ENCODE measurements at regions of chr3 and their contacts with region 1.

Region 1: DNA sequence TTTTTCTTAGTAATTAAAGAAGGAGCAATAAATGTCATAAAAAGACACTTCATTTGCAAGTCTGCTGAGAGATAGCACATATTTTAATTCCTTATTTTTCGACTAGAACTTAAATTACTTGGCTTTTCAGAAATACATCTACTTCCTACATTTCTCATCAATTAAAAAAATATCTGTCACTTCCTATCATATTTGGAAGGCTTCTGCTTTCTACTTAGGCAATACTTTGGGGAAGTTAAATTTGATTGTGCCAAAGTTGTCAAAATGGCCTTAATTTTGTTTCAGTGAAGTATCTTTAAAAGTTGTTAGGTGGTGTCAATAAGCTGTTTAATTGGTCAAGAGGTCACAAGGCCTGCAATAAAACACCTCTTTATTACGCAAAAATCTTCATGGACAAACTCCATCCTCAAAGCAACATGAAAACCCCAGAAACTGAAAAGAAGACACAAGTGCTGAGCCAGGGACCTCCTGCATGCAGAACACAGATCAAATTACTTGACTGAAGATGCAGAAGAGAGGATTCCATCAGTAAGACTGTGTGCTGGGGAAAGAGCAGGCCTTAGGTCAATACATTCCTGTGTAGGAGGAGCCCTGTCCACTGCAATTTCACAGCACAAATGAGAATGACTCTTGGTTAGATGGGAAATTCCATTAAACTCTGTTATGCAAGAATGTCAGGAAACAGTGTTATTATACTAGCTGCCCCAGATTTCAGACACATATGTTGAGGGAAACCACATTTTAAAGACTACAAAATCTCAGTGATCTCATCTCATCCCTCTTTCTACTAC is 48.0 kb upstream of the FSTL1 start:
- DNase-seq: peak; percentile 91
- ATAC-seq: peak; percentile 77
- H3K4me3 ChIP-seq: no peak overlapping the region
- H3K27ac ChIP-seq: 0 out of 2 replicates have a peak overlapping the region, but pooled peaks have one; percentile 4
- H3K4me1 ChIP-seq: peaks cover 36% of the 10 kb centered on the region
- H3K27me3 ChIP-seq: no peaks in the 10 kb centered on the region
- CTCF ChIP-seq: no peak

Region 2: GRCh38 chr3:120438665-120439370 is 59.9 kb before region 1 on chr3:
- CTCF ChIA-PET with region 1: no interaction called
- POLR2A ChIA-PET with region 1: interaction called, 4 read pairs
- intact Hi-C with region 1: loop called (anchors 2 kb)
- DNase-seq: peak; percentile 89
- ATAC-seq: peak; percentile 77
- H3K4me3 ChIP-seq: peak overlapping the region; percentile 8; the same call in 1 of the 2 replicates
- H3K27ac ChIP-seq: peak overlapping the region; percentile 74
- H3K4me1 ChIP-seq: peaks cover 79% of the 10 kb centered on the region
- H3K27me3 ChIP-seq: no peaks in the 10 kb centered on the region
- CTCF ChIP-seq: no peak

Region 3: DNA sequence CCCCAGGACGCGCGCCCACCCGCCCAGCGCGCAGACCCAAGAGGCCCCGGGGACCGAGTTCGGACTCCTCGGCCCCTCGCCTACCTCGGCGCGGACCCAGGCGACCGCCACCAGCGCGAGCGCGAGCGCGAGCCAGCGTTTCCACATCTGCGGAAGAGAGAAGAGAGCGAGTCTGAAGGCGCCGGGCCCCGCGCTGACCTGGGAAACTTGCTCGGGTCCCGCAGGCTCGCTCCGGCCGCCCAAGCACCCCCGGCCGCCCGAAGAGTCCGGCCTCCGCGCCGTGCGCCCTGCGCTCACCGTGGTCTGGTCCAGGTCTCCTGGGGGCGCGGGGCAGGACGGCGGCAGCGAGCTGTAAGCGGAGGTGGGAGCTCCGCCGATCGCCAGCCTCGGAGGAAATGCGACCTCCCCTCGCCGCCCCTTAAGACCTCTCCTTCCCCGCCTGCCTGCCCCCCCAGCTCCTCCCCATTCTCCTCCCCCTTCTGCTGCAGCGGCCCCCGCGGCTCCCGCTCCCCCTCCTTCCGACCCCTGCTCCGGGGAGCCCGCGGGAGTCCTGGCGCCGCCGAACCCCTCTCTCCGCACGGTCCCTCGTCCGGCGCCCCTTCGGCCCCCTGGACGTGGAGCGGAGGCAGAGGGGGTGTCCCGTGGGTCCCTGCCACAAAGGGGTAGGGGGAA is 48.0 kb before region 1 on chr3 and contains the start of gene FSTL1:
- CTCF ChIA-PET with region 1: no interaction called
- POLR2A ChIA-PET with region 1: interaction called, 8 read pairs
- intact Hi-C with region 1: loop called (anchors 1 kb)
- DNase-seq: peak; percentile 45
- ATAC-seq: peak; percentile 49
- H3K4me3 ChIP-seq: peak within 1 kb of the TSS; percentile 81
- H3K27ac ChIP-seq: peak within 1 kb of the TSS; percentile 25
- H3K4me1 ChIP-seq: peaks cover 38% of the 10 kb centered on the region
- H3K27me3 ChIP-seq: no peaks in the 10 kb centered on the region
- CTCF ChIP-seq: no peak
- total RNA-seq, gene FSTL1: 178 and 185 TPM in 2 replicates

Region 4: DNA sequence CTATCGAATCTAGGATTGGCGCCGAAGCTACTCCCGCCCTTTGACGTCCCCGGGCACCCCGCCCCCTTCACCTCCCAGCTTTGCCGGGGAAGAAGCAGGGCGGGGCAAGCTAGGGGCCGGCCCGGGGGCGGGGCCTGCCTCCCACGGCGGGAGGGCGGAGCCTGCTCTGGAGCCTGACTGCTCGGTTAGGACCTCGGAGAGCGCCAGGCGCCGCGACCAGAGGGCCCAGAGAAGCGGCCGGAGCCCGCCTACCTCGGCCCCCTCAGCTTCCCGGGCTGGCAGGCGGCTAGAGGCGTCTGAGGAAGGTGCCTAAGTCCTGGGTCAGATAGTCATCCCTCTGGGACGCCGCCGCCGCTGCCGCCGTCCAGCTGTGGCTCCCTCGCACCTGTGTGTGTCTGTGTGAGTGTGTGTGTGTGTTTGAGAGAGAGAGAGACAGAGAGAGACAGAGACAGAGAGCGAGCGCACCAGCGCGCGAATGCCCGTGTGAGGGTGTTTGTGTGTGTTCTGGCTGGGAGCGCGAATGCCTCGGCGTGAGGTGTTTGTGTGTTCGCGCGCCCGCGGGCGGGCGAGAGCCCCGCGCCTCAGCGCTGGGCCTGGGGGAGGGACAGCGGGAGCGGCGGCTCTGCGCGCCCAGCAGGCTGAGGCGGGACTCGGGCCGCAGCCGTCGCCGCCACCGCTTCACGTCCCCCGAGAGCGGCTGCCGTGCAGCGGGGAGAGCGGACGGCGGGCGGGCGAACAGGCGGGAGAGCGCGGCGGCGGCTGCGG is 409.5 kb after region 1 on chr3 and contains the start of gene STXBP5L:
- CTCF ChIA-PET with region 1: no interaction called
- POLR2A ChIA-PET with region 1: interaction called, 11 read pairs
- intact Hi-C with region 1: no loop called
- DNase-seq: peak; percentile 82
- ATAC-seq: peak; percentile 88
- H3K4me3 ChIP-seq: peak within 1 kb of the TSS; percentile 53
- H3K27ac ChIP-seq: no peak within 1 kb of the TSS
- H3K4me1 ChIP-seq: no peaks in the 10 kb centered on the region; the same call in 1 of the 2 replicates
- H3K27me3 ChIP-seq: peaks cover 79% of the 10 kb centered on the region
- CTCF ChIP-seq: no peak
- total RNA-seq, gene STXBP5L: not detected in 2 replicates

Measured in PC-3 (cell line).